ENCODE measurements at regions of chr15 and their contacts with region 1.

Region 1: DNA sequence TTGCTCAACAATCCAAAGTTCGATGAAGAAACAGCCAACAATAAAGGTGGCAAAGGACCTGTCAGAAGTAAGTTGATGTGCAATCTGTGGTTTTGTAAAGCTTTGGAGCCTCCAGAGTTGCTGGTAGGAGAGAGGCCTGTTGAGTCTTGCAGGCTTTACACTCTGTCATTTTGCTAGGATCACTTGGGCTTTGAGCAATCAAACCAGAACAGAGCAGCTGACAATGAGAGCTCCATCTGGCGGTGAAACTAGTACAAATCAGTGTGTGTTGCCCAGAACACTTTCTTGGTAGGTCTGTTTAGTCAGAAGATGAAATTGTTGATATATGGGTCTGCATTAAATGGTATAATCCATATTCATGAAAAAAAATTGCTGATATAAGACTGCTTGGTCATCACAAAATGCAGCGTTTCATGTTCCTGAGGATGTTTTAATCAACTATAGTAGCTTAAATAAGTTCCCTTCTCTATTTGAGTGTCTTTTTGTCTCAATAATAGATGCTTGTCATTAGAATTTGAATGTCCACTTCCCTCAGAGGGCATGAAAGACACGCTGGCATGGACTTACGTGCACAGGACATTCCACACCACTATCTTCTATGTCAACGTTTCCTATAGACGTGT is 25.7 kb downstream of the TMOD2 start:
- DNase-seq: peak; percentile 64
- ATAC-seq: peak; percentile 92
- H3K4me3 ChIP-seq: no peak overlapping the region
- H3K27ac ChIP-seq: no peak overlapping the region
- H3K4me1 ChIP-seq: no peaks in the 10 kb centered on the region
- H3K27me3 ChIP-seq: no peaks in the 10 kb centered on the region
- CTCF ChIP-seq: peak; percentile 65 to 81 (median 80); a peak in 5 of 6 replicates
- POLR2A ChIP-seq: no peak
- RAD21 ChIP-seq: peak; percentile 58

Region 2: DNA sequence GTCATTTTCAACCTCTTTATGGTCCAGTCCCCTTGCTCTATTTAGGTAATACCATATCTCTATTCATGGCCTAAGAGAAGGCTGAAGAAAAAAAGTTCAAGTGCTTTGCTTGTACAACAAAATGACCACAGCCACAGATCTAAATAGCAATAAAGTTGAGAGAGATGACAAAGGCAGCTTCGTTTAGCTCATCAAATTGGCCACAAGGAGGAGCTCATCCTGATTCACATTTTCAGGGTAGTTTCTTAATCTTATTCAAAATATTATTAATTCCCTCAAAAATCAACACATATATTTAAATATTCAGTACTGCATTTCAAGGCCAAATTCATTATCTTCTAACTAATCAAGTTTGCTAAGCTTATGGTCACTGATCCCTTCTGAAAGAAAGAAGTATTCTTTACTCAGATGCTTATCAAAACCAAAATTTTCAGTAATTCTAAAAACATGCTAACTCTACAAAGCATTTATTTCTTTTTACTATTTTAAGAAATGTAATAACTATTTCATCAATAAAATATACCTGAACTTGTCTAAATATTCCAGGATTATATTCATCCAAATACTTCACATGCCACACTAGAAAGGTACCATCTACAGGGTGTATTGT is 240.0 kb before region 1 on chr15:
- CTCF ChIA-PET with region 1: interaction called, 4 read pairs
- POLR2A ChIA-PET with region 1: no interaction called
- RAD21 ChIA-PET with region 1: no interaction called
- intact Hi-C with region 1: loop called (anchors 10 kb)
- DNase-seq: peak; percentile 10
- ATAC-seq: peak; percentile 61; the same call in 1 of the 2 replicates
- H3K4me3 ChIP-seq: no peak overlapping the region
- H3K27ac ChIP-seq: no peak overlapping the region
- H3K4me1 ChIP-seq: no peaks in the 10 kb centered on the region
- H3K27me3 ChIP-seq: no peaks in the 10 kb centered on the region
- CTCF ChIP-seq: peak; percentile 27 to 75 (median 65); a peak in 5 of 6 replicates
- POLR2A ChIP-seq: no peak
- RAD21 ChIP-seq: peak; percentile 48

Region 3: DNA sequence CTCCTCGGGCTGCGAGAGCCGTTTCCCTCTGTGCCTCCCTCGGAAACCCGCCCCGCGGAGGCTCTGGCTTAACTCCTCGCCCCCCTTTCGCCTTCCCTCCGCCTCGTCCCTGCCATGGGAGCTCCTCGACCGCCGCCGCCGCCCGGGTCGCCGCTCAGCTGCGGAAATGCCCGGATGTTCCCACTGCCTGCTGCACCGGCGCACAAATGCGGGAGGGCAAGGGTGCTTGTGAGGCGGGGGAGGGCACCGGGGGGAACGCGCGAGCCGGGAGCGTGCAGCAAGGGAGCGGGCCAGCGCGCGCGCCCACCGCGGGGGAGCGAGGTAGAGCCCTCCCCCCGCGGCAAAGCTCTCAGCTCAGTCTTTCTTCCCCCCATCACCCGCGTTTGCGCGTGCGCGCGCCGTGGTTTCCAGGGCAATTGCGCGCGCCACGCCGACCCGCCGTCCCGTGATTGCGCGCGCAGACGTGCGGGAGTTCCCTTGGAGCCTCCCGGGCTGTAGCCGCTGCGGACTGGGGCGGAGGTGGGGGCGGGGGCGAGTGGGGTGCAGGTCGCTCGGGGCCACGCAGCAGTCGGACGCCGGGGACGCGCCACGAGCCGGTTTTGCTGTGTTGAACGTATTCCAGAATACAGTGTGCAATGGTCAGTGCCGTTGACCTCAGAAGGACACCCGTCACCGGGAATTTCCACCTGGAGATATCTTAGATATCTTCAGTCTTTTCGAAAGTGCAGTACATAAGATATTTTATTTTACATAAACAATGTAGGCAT is 154.3 kb before region 1 on chr15 and contains the start of gene DMXL2:
- CTCF ChIA-PET with region 1: interaction called, 15 read pairs
- POLR2A ChIA-PET with region 1: no interaction called
- RAD21 ChIA-PET with region 1: no interaction called
- intact Hi-C with region 1: no loop called
- DNase-seq: peak; percentile 65
- ATAC-seq: peak; percentile 83
- H3K4me3 ChIP-seq: peak within 1 kb of the TSS; percentile 81 to 83
- H3K27ac ChIP-seq: peak within 1 kb of the TSS; percentile 91
- H3K4me1 ChIP-seq: peaks cover 10 to 22% of the 10 kb centered on the region in 2 experiments
- H3K27me3 ChIP-seq: no peaks in the 10 kb centered on the region
- CTCF ChIP-seq: no peak
- POLR2A ChIP-seq: no peak
- RAD21 ChIP-seq: no peak
- total RNA-seq, gene DMXL2: 21.5 TPM

Region 4: DNA sequence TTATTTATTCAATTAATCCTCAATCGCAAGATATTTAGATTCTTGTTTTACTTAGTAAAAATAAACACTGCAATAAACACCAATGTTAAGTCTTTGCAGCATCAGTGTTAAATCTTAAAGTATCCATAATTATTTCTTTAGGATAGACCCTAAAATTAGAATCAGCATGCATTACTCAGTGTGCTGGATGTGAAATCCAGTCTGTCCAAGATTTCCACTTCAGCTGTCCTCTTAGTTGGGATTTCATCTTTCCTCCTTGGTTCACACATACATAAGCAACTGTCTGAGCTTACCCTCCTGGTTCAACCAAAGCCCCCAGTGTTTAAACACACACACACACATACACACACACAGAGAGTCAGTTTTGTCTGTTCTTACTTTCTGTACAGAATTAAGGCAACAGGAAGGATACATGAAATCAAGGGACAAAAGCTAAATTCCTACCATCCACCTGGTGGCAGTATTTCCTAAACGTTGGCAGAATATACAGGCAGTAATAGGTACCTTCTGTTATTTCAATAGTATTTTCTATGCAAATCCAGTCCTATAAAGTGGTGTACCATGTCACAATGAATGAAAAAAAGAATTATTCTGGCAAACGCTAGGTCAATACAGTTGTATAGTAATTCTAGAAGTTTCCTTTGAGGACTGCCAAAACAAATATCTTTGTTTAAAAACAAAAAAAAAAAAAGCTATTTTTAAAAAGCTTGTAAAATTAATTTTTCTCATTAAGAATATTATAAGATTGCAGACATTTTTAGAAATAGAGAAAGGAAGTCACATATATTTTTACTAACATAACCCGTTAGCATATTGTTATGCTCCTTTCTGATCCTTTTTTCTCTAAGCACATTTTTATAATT is 127.2 kb before region 1 on chr15:
- CTCF ChIA-PET with region 1: interaction called, 296 read pairs
- POLR2A ChIA-PET with region 1: interaction called, 7 read pairs
- RAD21 ChIA-PET with region 1: interaction called, 40 to 41 read pairs
- intact Hi-C with region 1: loop called (anchors 1 kb)
- DNase-seq: peak; percentile 71
- ATAC-seq: peak; percentile 98
- H3K4me3 ChIP-seq: no peak overlapping the region
- H3K27ac ChIP-seq: no peak overlapping the region
- H3K4me1 ChIP-seq: peaks cover 3 to 4% of the 10 kb centered on the region in 2 experiments; a peak in 2 of 4 replicates
- H3K27me3 ChIP-seq: no peaks in the 10 kb centered on the region
- CTCF ChIP-seq: peak; percentile 75 to 92 (median 82)
- POLR2A ChIP-seq: no peak
- RAD21 ChIP-seq: peak; percentile 94

Region 5: DNA sequence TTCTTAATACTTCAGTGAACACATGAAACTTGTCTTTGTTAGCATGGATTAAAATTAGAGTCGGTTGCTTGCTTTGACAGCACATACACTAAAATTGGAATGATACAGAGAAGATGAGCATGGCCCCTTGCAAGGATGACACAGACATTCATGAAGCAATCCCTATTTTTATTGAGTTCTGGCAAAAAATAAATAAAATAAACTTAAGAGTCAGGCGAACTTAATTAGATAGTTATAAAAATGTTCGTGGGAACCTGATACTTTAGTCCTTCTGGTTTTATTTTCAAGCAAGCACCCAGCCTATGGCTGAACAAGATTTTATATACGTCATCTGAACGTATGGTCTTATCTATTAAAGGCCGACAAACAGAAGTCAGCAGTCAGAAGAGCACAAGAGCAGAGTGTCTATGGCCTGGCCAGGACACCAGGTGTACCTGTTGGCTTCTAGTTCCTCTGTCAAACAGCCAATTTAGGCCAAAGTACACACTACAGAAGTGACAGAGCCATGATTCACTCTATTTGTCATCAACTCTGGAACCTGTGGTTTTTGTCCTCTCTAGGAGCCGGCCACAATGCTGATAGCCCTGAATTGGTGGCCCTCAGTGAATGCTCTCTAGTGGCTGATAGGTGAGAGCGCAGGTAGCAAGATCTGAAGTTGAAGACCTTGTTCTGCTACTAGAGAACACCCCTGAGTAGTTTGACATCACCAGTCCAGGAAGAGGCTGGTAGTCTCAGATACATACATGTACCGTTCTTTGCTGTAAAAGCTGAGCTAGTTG is 130.3 kb after region 1 on chr15:
- CTCF ChIA-PET with region 1: interaction called, 12 read pairs
- POLR2A ChIA-PET with region 1: no interaction called
- RAD21 ChIA-PET with region 1: no interaction called
- intact Hi-C with region 1: loop called (anchors 1 kb)
- DNase-seq: peak; percentile 96
- ATAC-seq: peak; percentile 98
- H3K4me3 ChIP-seq: no peak overlapping the region
- H3K27ac ChIP-seq: peak overlapping the region; percentile 44
- H3K4me1 ChIP-seq: peaks cover 31 to 32% of the 10 kb centered on the region in 2 experiments
- H3K27me3 ChIP-seq: no peaks in the 10 kb centered on the region
- CTCF ChIP-seq: peak; percentile 50 to 74 (median 66); a peak in 5 of 6 replicates
- POLR2A ChIP-seq: no peak
- RAD21 ChIP-seq: peak; percentile 66

Region 6: GRCh38 chr15:51917493-51917892 is 140.4 kb after region 1 on chr15:
- CTCF ChIA-PET with region 1: interaction called, 15 read pairs
- POLR2A ChIA-PET with region 1: no interaction called
- RAD21 ChIA-PET with region 1: interaction called in 1 of 2 experiments, 3 read pairs
- intact Hi-C with region 1: no loop called
- DNase-seq: peak; percentile 64
- ATAC-seq: peak; percentile 99
- H3K4me3 ChIP-seq: no peak overlapping the region
- H3K27ac ChIP-seq: no peak overlapping the region
- H3K4me1 ChIP-seq: no peaks in the 10 kb centered on the region
- H3K27me3 ChIP-seq: no peaks in the 10 kb centered on the region
- CTCF ChIP-seq: peak; percentile 51 to 66 (median 62); a peak in 5 of 6 replicates
- POLR2A ChIP-seq: no peak
- RAD21 ChIP-seq: peak; percentile 76

Measured in HCT116 (cell line).